ENCODE measurements at regions of chr9 and their contacts with region 1.

Region 1: GRCh38 chr9:117487555-117488175 is 72.8 kb upstream of the ASTN2 start:
- DNase-seq: peak; percentile 77 to 83 (median 78)
- ATAC-seq: peak; percentile 96
- H3K4me3 ChIP-seq: no peak overlapping the region
- H3K27ac ChIP-seq: peak overlapping the region; percentile 39 to 77 (median 66)
- H3K4me1 ChIP-seq: peaks cover 23% of the 10 kb centered on the region
- H3K27me3 ChIP-seq: no peaks in the 10 kb centered on the region
- CTCF ChIP-seq: peak; percentile 92 to 99 (median 97)
- POLR2A ChIP-seq: peak in 1 of 3 donors; percentile 48

Region 2: DNA sequence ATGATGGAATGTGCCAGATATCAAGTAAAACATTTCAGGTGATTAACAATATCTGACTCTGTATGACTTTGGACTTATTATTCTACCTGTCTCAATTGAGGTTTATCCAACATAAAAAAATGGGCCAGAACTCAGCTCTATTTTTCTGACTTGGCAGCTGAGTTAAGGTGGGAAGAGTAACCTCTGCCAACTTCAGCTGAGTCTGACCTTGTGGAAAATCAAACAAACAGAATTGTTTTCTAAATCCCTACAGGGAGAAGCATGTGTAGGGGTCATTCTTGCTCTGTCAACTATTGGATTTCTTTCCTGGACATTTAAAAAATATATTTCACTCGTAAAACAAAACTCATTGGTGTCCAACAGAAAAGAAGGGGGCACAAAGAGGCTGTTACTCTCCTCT is 77.2 kb after region 1 on chr9:
- intact Hi-C with region 1: loop called (anchors 10 kb)
- DNase-seq: no peak
- ATAC-seq: no peak
- H3K4me3 ChIP-seq: no peak overlapping the region
- H3K27ac ChIP-seq: no peak overlapping the region
- H3K4me1 ChIP-seq: no peaks in the 10 kb centered on the region
- H3K27me3 ChIP-seq: no peaks in the 10 kb centered on the region
- CTCF ChIP-seq: no peak
- POLR2A ChIP-seq: no peak

Measured in body of pancreas (tissue), 4 donors.